Panc1 (cell line): ENCODE measurements at regions of chr1 and their contacts with region 1.

Region 1: GRCh38 chr1:85576642-85577418 is 3.7 kb upstream of the CCN1 start:
- DNase-seq: peak; percentile 63
- ATAC-seq: peak; percentile 59
- H3K4me3 ChIP-seq: peak overlapping the region; percentile 55 to 94
- H3K27ac ChIP-seq: peak overlapping the region; percentile 99
- H3K4me1 ChIP-seq: peaks cover 51% of the 10 kb centered on the region
- H3K27me3 ChIP-seq: no peaks in the 10 kb centered on the region
- CTCF ChIP-seq: peak; percentile 99

Region 2: GRCh38 chr1:85360730-85361493 is 215.9 kb before region 1 on chr1:
- CTCF ChIA-PET with region 1: no interaction called
- POLR2A ChIA-PET with region 1: interaction called, 15 read pairs
- in situ Hi-C with region 1: no loop called
- intact Hi-C with region 1: no loop called
- DNase-seq: no peak
- ATAC-seq: peak; percentile 77
- H3K4me3 ChIP-seq: no peak overlapping the region
- H3K27ac ChIP-seq: peak overlapping the region; percentile 76
- H3K4me1 ChIP-seq: peaks cover 46% of the 10 kb centered on the region
- H3K27me3 ChIP-seq: no peaks in the 10 kb centered on the region
- CTCF ChIP-seq: no peak

Region 3: DNA sequence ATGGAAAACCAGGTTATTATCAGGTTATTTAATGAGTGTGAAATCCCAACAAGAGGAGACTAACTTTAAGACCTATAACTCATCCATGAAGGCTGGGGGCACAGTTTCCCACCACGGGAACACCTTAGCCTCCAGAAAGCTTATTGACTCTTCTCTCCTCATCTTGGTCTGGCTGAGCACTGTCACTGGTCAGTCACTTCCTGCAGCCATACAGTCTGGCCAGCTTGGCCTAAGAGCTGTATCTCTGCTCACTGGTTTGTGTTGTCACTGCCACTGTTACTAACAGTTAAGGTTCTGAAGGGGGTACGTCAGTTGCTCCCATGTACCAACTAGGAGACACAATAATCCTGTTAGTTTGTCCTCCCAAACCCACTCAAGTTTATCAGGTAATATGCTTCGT is 95.1 kb before region 1 on chr1:
- CTCF ChIA-PET with region 1: no interaction called
- POLR2A ChIA-PET with region 1: interaction called, 10 read pairs
- in situ Hi-C with region 1: no loop called
- intact Hi-C with region 1: no loop called
- DNase-seq: no peak
- ATAC-seq: 0 out of 2 replicates have a peak, but pooled peaks have one; percentile 50
- H3K4me3 ChIP-seq: no peak overlapping the region
- H3K27ac ChIP-seq: no peak overlapping the region
- H3K4me1 ChIP-seq: no peaks in the 10 kb centered on the region
- H3K27me3 ChIP-seq: no peaks in the 10 kb centered on the region
- CTCF ChIP-seq: no peak

Region 4: DNA sequence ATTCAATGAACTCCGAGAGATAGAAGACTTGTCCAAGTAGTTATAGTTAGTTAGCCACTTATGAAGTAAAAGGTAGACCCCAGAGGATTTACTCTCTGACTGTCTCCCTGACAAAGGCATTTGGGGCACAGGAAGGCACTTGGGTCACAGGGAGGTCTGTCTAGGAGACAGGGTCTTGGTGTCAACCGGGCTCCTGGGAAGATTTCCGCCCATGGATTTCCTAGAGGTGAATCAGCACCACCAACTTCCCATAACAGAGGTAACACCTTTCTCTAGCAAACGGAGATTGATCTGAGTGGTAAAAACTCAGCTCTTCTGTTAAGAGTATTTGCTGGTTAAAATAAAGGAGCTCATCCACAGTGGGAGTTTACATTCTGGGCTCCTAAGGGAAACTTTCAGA is 20.1 kb after region 1 on chr1:
- CTCF ChIA-PET with region 1: no interaction called
- POLR2A ChIA-PET with region 1: no interaction called
- in situ Hi-C with region 1: no loop called
- intact Hi-C with region 1: no loop called
- DNase-seq: no peak
- ATAC-seq: no peak
- H3K4me3 ChIP-seq: no peak overlapping the region
- H3K27ac ChIP-seq: peak overlapping the region; percentile 58
- H3K4me1 ChIP-seq: peaks cover 19% of the 10 kb centered on the region
- H3K27me3 ChIP-seq: no peaks in the 10 kb centered on the region
- CTCF ChIP-seq: no peak

Region 5: DNA sequence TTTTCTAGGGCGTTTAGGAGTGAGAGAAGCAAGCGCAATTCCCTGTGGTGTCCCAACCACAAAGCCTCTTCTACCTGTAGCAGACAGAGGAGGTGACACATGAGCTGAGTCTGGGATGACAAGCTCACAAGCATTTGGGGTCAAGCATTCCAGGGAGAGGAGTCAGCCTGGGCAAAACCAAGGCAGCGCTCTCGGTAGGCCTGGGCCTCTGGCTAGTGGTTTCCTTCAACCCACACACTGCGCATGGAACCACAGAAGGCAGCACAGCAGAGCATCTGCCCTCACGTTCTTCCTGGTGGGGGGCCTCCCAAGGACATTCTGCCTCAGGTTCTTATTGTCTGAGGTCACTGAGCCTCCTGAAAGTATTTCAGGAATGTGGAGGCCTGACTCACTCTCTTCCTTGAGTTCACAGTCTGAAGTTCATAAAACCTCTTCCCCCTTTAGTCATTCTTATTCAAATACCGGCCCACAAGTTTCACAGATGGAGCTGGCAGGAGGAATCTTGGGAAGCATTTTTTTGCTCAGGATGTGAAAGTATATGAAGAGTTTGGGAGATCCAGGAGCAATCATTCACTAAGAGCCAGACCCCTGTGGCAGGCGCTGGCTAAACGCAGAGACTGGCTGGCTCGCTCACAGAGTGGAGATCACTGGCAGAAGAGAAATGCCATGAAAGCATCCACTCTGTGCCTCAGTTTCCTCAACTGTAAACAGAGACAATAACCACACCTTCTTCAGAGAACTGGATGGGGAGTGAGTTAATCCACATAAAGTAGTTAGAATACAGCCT is 30.5 kb after region 1 on chr1:
- CTCF ChIA-PET with region 1: no interaction called
- POLR2A ChIA-PET with region 1: interaction called, 10 read pairs
- in situ Hi-C with region 1: no loop called
- intact Hi-C with region 1: no loop called
- DNase-seq: peak; percentile 100
- ATAC-seq: peak; percentile 92
- H3K4me3 ChIP-seq: no peak overlapping the region
- H3K27ac ChIP-seq: peak overlapping the region; percentile 98
- H3K4me1 ChIP-seq: peaks cover 47% of the 10 kb centered on the region
- H3K27me3 ChIP-seq: no peaks in the 10 kb centered on the region
- CTCF ChIP-seq: no peak

Region 6: DNA sequence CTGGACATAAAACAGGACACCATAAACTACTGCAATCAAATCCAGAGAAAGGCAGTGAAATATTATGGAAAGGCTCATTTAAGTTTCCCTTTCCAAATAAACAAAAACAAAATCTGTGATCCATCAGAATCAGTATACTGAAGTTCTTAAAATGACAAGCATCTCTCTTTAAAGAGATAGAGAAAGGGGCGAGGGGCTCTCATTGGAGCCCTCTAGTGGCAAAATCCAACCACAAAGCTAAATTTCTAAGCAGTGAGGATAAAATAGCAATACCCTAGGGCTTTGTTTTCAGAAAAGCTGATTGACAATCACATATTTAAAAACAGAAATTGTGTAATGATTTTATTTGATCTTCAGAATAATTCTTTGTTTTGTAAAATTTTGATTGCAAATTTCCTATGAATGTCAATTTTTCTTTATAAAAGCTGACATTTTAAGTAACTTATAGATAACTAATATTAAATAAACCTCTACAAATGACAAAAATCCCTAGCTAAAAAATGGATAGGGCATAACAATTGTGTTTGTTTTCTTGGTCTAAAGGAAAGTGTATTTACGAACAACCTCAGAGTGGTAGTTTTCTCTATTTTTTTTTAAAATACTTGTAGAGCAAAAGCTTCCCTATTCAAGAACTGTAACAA is 441.6 kb after region 1 on chr1:
- CTCF ChIA-PET with region 1: no interaction called
- POLR2A ChIA-PET with region 1: no interaction called
- in situ Hi-C with region 1: no loop called
- intact Hi-C with region 1: loop called (anchors 10 kb)
- DNase-seq: peak; percentile 54
- ATAC-seq: peak; percentile 88
- H3K4me3 ChIP-seq: no peak overlapping the region
- H3K27ac ChIP-seq: no peak overlapping the region
- H3K4me1 ChIP-seq: no peaks in the 10 kb centered on the region
- H3K27me3 ChIP-seq: peaks cover 4% of the 10 kb centered on the region; the same call in 1 of the 2 replicates
- CTCF ChIP-seq: peak; percentile 96; the same call in 1 of the 2 replicates